Activated naive CD4-positive, alpha-beta T cell treated with anti-CD3 and anti-CD28 coated beads, Interleukin-2, amount 10 ng/mL, durations not matched to agents 7 days and 5 days (primary cell): ENCODE measurements at regions of chr1 and their contacts with region 1.

Region 1: DNA sequence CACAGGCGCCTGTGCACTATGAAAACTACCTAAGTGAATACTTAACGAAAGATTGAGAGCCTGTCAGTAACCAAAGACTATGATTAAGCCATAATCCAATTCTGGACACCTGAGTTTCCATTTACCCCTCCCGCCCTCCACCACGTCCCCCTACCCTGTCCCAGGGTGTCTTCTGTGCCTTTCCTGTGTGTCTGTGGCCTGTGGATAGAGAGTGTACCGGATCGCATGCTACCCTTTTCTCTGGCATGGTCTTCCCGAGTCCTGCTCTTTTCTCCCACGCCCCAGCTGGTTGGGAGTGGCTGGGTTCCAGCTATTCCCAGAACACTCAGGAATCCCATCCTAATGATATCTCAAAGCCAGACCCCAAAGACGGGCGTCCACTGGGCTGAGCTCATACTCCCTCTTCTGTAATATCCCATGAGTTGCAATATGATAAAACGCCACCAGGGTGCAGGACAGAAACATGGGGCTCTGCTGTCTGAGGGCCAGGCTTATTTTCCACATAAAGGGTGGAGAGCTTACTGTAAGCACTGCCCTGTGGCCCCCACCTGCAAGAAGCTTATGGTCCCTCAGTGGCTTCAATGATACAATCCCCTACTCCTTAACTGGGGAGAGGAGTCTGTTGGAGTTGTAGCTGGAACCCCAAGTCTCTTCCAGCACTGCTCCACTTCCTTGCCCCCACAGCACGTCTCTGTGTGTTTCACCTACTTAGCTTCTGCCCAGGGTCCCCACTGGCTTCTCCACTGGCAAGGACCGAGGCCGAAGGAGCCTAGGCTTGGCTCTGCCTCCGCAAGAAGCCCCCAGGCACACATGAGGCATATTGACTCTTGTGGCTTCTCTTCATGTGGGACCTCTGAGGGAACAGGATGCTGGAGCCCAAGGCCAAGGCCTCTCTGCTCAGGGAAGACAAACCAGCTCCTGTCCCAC is 17.6 kb upstream of the ALX3 start:
- DNase-seq: peak; percentile 66
- H3K4me3 Mint-ChIP-seq: no peak overlapping the region
- H3K27ac Mint-ChIP-seq: no peak overlapping the region
- H3K4me1 Mint-ChIP-seq: peaks cover 16% of the 10 kb centered on the region
- H3K27me3 Mint-ChIP-seq: peaks cover 78% of the 10 kb centered on the region

Region 2: GRCh38 chr1:110053557-110054428 is 34.3 kb before region 1 on chr1:
- CTCF ChIA-PET with region 1: interaction called, 10 read pairs
- DNase-seq: peak; percentile 79
- H3K4me3 Mint-ChIP-seq: no peak overlapping the region
- H3K27ac Mint-ChIP-seq: no peak overlapping the region
- H3K4me1 Mint-ChIP-seq: no peaks in the 10 kb centered on the region
- H3K27me3 Mint-ChIP-seq: no peaks in the 10 kb centered on the region

Region 3: DNA sequence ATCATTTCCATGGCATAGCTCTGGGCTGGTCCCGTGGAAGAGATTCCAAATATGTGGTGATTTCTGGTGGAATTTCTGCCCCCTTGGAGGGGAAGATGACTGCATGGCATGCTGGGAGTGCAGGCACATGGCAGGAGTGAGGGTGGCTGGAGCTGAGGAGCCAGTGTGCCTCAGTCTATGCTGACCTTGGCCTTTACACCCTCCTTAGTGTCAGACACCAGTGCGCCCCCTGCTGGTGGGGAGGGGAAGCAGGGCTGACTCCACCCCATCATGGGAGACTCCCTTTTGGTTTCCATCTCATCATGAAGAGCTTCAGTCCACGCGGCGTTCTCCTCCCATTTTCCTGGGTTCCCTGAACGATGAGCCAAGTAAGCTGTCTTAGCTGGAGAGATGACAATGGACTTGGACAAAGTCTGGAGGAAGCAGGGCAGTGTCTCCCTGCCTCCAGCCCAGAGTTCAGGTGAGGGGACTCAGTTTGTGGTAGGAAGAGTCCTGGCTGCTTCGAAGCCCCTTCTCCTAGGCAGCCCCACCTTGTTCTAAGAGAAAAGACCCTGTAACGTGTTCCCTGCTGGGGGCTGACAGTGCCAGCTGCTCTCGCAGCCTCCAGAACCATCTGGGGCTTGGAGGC is 27.9 kb before region 1 on chr1:
- CTCF ChIA-PET with region 1: interaction called, 11 read pairs
- DNase-seq: peak; percentile 81
- H3K4me3 Mint-ChIP-seq: no peak overlapping the region
- H3K27ac Mint-ChIP-seq: no peak overlapping the region
- H3K4me1 Mint-ChIP-seq: no peaks in the 10 kb centered on the region
- H3K27me3 Mint-ChIP-seq: peaks cover 13% of the 10 kb centered on the region

Region 4: GRCh38 chr1:110076789-110077500 is 11.1 kb before region 1 on chr1:
- CTCF ChIA-PET with region 1: interaction called, 16 read pairs
- DNase-seq: no peak
- H3K4me3 Mint-ChIP-seq: no peak overlapping the region
- H3K27ac Mint-ChIP-seq: no peak overlapping the region
- H3K4me1 Mint-ChIP-seq: no peaks in the 10 kb centered on the region
- H3K27me3 Mint-ChIP-seq: peaks cover 85% of the 10 kb centered on the region

Region 5: DNA sequence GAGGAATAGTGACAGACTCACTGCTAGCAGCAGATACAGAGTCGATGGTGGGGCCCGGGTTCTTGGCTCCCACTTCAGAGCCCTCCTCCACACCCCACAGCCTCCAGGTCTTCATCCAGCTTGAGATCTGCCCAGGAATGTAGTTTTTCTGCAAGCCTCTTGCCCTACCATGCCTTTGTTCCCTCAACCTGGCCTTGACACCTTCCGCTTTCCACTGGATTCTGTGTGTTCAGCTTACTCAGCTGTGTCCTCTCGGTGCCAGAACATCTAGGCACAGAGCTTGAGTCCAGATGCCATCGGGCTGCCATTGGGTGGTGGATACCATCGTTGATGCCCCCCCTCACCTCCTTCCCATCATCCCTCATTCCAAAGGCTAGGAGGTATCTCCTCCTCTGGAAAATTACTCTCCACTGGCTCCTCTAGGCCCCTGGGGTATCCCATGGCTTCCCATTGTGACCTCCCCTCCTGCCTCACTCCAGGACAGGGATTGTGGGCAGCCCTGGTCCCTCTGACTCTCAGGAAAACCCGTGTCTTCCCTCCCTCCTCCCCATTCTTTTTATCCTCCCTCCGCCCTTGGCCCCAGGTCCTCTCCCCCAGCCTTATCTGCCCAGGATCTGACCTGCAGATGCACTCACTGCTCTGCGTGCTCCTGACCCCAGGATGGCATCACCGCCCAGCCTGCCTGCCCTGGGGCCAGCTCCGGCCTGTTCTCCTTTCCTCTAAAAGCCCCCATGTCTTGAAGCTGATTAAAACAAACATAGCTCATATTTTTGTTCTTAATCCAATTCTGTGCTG is 10.0 kb after region 1 on chr1:
- CTCF ChIA-PET with region 1: interaction called, 133 read pairs
- DNase-seq: no peak
- H3K4me3 Mint-ChIP-seq: no peak overlapping the region
- H3K27ac Mint-ChIP-seq: no peak overlapping the region
- H3K4me1 Mint-ChIP-seq: no peaks in the 10 kb centered on the region
- H3K27me3 Mint-ChIP-seq: peaks cover 67% of the 10 kb centered on the region

Region 6: DNA sequence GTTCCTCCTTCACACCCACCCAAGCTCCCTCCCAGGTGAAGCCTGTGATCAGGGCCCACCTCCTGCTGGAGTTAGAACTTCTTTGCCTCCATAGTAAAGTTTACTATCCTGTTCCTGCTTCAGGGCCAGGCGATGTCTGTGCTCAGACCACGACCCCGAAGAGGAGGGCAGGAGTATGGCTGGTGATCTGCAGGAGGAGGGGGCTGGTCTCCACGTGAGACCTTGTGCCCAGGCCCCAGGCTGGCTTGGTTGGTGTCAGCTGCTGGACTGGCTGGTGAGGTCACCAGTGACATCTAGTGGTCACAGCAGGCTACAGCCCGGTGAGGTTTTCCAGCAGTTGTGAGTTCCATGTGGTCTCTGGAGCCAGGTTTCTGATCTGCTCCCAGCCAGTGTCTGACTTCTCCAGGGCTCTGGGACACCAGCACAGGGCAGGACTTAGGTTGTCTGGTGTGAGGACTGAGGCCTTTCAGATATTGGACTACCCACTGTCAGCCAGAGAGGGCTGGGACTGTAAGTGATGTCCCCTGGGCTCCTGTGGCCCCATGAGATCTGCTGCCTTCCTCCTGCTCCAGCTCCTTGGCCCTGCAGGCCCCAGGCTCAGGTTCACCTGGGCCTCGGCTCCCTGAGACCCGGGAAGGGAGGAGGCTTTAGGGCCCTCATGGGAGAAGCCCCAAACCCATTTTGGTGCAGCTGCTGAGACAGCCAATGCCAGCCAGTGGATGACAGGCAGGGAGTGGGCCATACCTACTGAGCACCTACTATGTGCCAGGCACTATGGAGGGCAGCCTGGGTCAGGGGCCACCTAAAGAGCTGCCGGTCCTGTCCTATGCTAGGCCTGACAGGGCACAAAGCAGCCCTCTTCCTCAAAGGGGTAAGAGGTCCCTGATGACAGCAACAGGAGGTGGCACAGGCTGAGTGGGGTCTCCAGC is 18.2 kb after region 1 on chr1:
- CTCF ChIA-PET with region 1: interaction called, 133 read pairs
- DNase-seq: peak; percentile 73
- H3K4me3 Mint-ChIP-seq: no peak overlapping the region
- H3K27ac Mint-ChIP-seq: no peak overlapping the region
- H3K4me1 Mint-ChIP-seq: no peaks in the 10 kb centered on the region
- H3K27me3 Mint-ChIP-seq: peaks cover 39% of the 10 kb centered on the region